Posterior vena cava (tissue), 2 donors: ENCODE measurements at regions of chr7 and their contacts with region 1.

Region 1: GRCh38 chr7:159086301-159086925 is 58.3 kb downstream of the VIPR2 start:
- DNase-seq: peak; percentile 54

Region 2: GRCh38 chr7:159064816-159065510 is 21.4 kb before region 1 on chr7:
- intact Hi-C with region 1: loop called in 1 of 2 experiments (anchors 1 kb)
- DNase-seq: no peak

Region 3: GRCh38 chr7:159075563-159076238 is 10.7 kb before region 1 on chr7:
- intact Hi-C with region 1: no loop called
- DNase-seq: peak; percentile 78

Region 4: GRCh38 chr7:159218170-159219006 is 132.0 kb after region 1 on chr7:
- intact Hi-C with region 1: no loop called
- DNase-seq: no peak